ENCODE measurements at regions of chr22 and their contacts with region 1.

Region 1: GRCh38 chr22:21982338-21982965 is at the start of gene TOP3B:
- DNase-seq: peak; percentile 17
- ATAC-seq: peak; percentile 93
- H3K4me3 ChIP-seq: peak within 1 kb of the TSS; percentile 79
- H3K27ac ChIP-seq: peak within 1 kb of the TSS; percentile 69
- H3K4me1 ChIP-seq: peaks cover 4% of the 10 kb centered on the region
- H3K27me3 ChIP-seq: no peaks in the 10 kb centered on the region
- CTCF ChIP-seq: no peak
- EP300 ChIP-seq: no peak
- POLR2A ChIP-seq: peak; percentile 92
- RAD21 ChIP-seq: peak; percentile 30; the same call in 1 of the 2 replicates
- polyA plus RNA-seq, gene TOP3B: 0.60 to 1.6 TPM

Region 2: DNA sequence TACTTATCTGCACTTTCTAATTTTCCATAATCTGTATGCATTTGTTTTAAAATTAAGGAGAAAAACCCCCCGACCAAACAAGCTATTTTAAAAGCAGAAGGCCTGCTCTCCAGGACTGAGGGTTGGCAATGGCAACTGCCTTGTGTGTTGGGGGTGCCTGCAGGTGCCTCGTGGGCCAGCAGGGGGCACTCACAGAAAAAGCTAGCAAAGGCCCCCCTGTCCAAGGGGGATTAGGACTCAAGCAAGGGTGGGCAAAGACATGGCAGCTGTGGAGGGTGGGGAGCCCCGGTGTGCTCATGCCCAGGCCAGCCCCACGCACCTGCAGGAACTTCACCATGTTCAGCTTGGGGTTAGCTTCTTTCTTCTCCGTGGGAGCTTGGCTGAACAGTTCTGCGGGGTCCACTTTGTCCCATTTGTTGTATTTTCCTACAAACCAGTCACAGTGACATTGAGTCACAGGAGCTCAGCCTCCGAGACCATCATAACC is 10.1 kb before region 1 on chr22:
- CTCF ChIA-PET with region 1: interaction called, 47 read pairs
- POLR2A ChIA-PET with region 1: no interaction called
- RAD21 ChIA-PET with region 1: interaction called, 3 read pairs
- SMC1A ChIA-PET with region 1: interaction called, 10 read pairs
- in situ Hi-C with region 1: no loop called
- intact Hi-C with region 1: no loop called
- DNase-seq: no peak
- ATAC-seq: peak; percentile 92
- H3K4me3 ChIP-seq: no peak overlapping the region
- H3K27ac ChIP-seq: no peak overlapping the region
- H3K4me1 ChIP-seq: no peaks in the 10 kb centered on the region; the same call in 1 of the 2 replicates
- H3K27me3 ChIP-seq: no peaks in the 10 kb centered on the region
- CTCF ChIP-seq: peak; percentile 70 to 95 (median 94)
- EP300 ChIP-seq: no peak
- POLR2A ChIP-seq: no peak
- RAD21 ChIP-seq: peak; percentile 75

Region 3: DNA sequence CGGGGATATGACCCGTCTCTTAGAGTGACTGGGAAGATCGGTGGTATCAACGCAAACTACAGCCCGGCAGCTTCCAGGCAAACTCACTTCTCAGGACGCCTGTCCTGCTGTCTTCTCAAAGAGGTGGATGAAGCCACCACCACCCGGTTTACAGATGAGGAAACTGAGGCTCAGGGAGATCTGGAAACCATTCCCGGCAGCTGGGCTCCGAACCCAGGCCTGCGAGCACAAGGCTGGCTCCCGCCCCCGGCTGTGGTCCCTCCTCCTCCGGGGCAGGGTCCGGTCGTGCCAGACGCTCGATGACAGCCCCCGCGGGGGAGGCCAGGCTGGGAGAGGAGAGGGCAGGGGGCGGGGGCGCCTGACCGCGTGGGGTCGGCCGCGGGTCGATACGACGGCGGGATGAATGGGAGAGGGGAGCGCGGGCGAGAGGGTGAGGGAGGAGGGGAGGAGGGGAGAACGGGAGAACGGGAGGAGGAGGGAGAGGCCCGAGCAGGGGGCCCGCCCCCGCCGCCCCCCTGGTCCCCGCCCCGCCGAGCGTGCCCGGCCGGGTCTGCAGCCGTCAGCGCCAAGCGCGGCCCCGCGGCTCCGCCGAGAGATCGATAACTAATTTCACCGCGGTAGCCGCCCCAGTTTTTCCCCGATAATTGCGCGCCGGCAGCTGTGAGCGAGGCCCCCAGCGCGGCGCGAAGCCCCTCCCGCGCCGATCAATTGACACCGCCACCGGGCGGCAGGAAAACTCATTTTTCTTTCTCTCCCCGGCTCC is 1583.7 kb after region 1 on chr22:
- CTCF ChIA-PET with region 1: no interaction called
- POLR2A ChIA-PET with region 1: interaction called, 11 read pairs
- RAD21 ChIA-PET with region 1: no interaction called
- SMC1A ChIA-PET with region 1: no interaction called
- in situ Hi-C with region 1: no loop called
- intact Hi-C with region 1: no loop called
- DNase-seq: no peak
- ATAC-seq: no peak
- H3K4me3 ChIP-seq: no peak overlapping the region
- H3K27ac ChIP-seq: no peak overlapping the region
- H3K4me1 ChIP-seq: no peaks in the 10 kb centered on the region
- H3K27me3 ChIP-seq: peaks cover 5 to 11% of the 10 kb centered on the region in 2 experiments
- CTCF ChIP-seq: no peak
- EP300 ChIP-seq: no peak
- POLR2A ChIP-seq: no peak
- RAD21 ChIP-seq: no peak

Measured in GM12878 (cell line).